Activated B cell treated with CpG ODN at 0.5 μM for 24 hours (primary cell): ENCODE measurements at regions of chr1 and their contacts with region 1.

Region 1: GRCh38 chr1:57058652-57059501 is 93.1 kb upstream of the C8B start:
- DNase-seq: no peak
- ATAC-seq: no peak
- H3K4me3 Mint-ChIP-seq: no peak overlapping the region
- H3K27ac Mint-ChIP-seq: no peak overlapping the region
- H3K4me1 Mint-ChIP-seq: no peaks in the 10 kb centered on the region
- H3K27me3 Mint-ChIP-seq: peaks cover 4% of the 10 kb centered on the region
- CTCF ChIP-seq: no peak

Region 2: GRCh38 chr1:56890229-56890628 is 168.6 kb before region 1 on chr1:
- CTCF ChIA-PET with region 1: no interaction called
- POLR2A ChIA-PET with region 1: no interaction called
- intact Hi-C with region 1: no loop called
- DNase-seq: no peak
- ATAC-seq: no peak
- H3K4me3 Mint-ChIP-seq: no peak overlapping the region
- H3K27ac Mint-ChIP-seq: no peak overlapping the region
- H3K4me1 Mint-ChIP-seq: no peaks in the 10 kb centered on the region
- H3K27me3 Mint-ChIP-seq: no peaks in the 10 kb centered on the region
- CTCF ChIP-seq: no peak

Region 3: DNA sequence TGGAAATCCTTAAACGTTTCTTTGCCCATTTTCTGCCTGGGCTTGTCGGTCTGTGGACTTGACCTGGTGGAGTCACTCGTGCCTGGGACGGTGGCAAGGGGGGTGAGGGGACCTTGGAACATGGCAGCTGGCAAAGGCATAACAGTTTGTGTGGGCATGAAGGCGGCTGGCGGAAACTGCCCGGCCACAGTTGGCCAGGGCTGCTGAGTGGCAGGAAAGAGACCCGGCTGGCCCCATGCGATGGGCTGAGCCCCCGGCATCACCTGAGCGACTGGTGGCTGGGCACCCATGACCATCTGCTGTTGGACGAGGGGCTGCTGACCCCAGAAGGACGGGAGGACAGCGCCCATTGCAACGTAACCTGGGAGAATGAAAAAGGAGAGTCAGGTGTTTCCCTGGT is 43.8 kb before region 1 on chr1:
- CTCF ChIA-PET with region 1: no interaction called
- POLR2A ChIA-PET with region 1: interaction called, 16 read pairs
- intact Hi-C with region 1: no loop called
- DNase-seq: no peak
- ATAC-seq: no peak
- H3K4me3 Mint-ChIP-seq: no peak overlapping the region
- H3K27ac Mint-ChIP-seq: no peak overlapping the region
- H3K4me1 Mint-ChIP-seq: no peaks in the 10 kb centered on the region
- H3K27me3 Mint-ChIP-seq: peaks cover 5% of the 10 kb centered on the region
- CTCF ChIP-seq: no peak

Region 4: GRCh38 chr1:57072401-57073110 is 13.7 kb after region 1 on chr1:
- CTCF ChIA-PET with region 1: no interaction called
- POLR2A ChIA-PET with region 1: no interaction called
- intact Hi-C with region 1: no loop called
- DNase-seq: no peak
- ATAC-seq: no peak
- H3K4me3 Mint-ChIP-seq: no peak overlapping the region
- H3K27ac Mint-ChIP-seq: no peak overlapping the region
- H3K4me1 Mint-ChIP-seq: no peaks in the 10 kb centered on the region
- H3K27me3 Mint-ChIP-seq: no peaks in the 10 kb centered on the region
- CTCF ChIP-seq: no peak

Region 5: GRCh38 chr1:57385336-57385735 is 326.5 kb after region 1 on chr1:
- CTCF ChIA-PET with region 1: no interaction called
- POLR2A ChIA-PET with region 1: no interaction called
- intact Hi-C with region 1: no loop called
- DNase-seq: no peak
- ATAC-seq: no peak
- H3K4me3 Mint-ChIP-seq: no peak overlapping the region
- H3K27ac Mint-ChIP-seq: no peak overlapping the region
- H3K4me1 Mint-ChIP-seq: no peaks in the 10 kb centered on the region
- H3K27me3 Mint-ChIP-seq: no peaks in the 10 kb centered on the region
- CTCF ChIP-seq: no peak

Region 6: DNA sequence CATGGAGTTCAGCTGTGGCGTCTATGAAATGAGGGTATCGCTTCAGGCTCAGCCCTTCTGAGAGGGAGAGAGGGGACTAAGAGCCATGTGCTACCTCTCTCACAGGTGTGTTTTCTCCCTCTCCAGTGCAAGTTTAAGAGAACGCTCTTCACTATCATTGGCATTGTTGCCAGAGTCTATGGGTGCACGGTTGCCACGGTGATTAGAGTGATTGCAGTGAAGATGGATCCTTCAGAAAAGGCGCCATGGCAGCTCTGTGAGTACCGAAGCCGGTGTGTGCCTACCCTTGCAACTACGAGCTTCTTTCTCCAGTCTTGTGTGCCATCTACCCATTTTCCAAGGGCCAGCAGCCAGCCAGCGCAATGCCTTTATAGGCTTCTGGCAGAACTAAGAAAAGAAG is 1197.2 kb after region 1 on chr1:
- CTCF ChIA-PET with region 1: no interaction called
- POLR2A ChIA-PET with region 1: no interaction called
- intact Hi-C with region 1: no loop called
- DNase-seq: no peak
- ATAC-seq: no peak
- H3K4me3 Mint-ChIP-seq: no peak overlapping the region
- H3K27ac Mint-ChIP-seq: no peak overlapping the region
- H3K4me1 Mint-ChIP-seq: no peaks in the 10 kb centered on the region
- H3K27me3 Mint-ChIP-seq: peaks cover 10% of the 10 kb centered on the region
- CTCF ChIP-seq: no peak